Activated CD4-positive, alpha-beta T cell treated with anti-CD3 and anti-CD28 coated beads, Interleukin-2, amount 10 ng/mL, durations not matched to agents 24 days and 14 days (primary cell): ENCODE measurements at regions of chr4 and their contacts with region 1.

Region 1: GRCh38 chr4:26459054-26459755 is 31.1 kb downstream of the CCKAR start:
- DNase-seq: peak; percentile 65
- H3K4me3 Mint-ChIP-seq: peak overlapping the region; percentile 41
- H3K27ac Mint-ChIP-seq: no peak overlapping the region
- H3K4me1 Mint-ChIP-seq: peaks cover 14% of the 10 kb centered on the region
- H3K27me3 Mint-ChIP-seq: peaks cover 3% of the 10 kb centered on the region

Region 2: DNA sequence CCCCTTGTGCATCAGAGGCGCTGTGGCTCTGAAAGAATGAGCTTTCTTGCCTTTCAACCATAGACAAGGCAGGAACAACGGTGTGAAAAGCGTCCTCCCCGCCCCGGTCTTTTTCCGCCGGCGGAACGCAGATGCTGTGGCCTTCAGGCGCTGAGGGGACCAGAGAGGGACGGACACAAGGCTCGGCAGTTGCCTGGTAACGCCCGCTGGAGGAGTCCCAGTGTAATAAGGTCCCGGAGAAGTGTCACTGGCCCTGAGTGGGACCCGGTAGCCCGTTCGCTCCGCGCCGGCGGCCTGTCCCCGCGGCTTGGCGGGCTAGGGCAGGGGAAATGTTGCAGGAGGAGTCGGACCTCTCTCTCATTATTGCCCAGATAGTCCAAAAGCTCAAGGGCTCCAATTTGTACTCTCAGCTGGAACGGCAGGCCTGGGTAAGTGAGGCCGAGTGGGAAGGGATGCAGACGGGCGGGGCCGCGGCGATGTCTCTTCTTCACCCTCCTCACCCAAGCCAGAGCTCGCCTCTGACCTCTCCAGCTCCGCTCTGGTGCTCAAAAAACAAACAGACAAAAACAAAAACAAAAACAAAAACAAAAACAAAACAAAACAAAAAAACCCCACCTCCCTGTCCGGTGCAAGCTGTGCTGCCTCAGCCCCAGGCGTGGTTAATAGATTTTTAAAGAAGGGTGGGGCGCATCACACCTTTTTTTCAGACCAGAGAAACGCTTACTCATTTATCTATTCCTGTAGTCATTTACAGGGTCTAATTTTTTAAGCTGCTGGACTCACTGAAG is 124.9 kb after region 1 on chr4 and contains the start of gene TBC1D19:
- intact Hi-C with region 1: loop called (anchors 10 kb)
- DNase-seq: peak; percentile 96
- H3K4me3 Mint-ChIP-seq: peak within 1 kb of the TSS; percentile 98
- H3K27ac Mint-ChIP-seq: peak within 1 kb of the TSS; percentile 95
- H3K4me1 Mint-ChIP-seq: peaks cover 27% of the 10 kb centered on the region
- H3K27me3 Mint-ChIP-seq: no peaks in the 10 kb centered on the region
- total RNA-seq, gene TBC1D19: 3.3 and 3.6 TPM in 2 replicates

Region 3: GRCh38 chr4:26719954-26720552 is 260.8 kb after region 1 on chr4:
- intact Hi-C with region 1: loop called (anchors 1 kb)
- DNase-seq: no peak
- H3K4me3 Mint-ChIP-seq: no peak overlapping the region
- H3K27ac Mint-ChIP-seq: no peak overlapping the region
- H3K4me1 Mint-ChIP-seq: no peaks in the 10 kb centered on the region
- H3K27me3 Mint-ChIP-seq: no peaks in the 10 kb centered on the region

Region 4: GRCh38 chr4:27010334-27010940 is 551.2 kb after region 1 on chr4:
- intact Hi-C with region 1: loop called (anchors 1 kb)
- DNase-seq: peak; percentile 84
- H3K4me3 Mint-ChIP-seq: no peak overlapping the region
- H3K27ac Mint-ChIP-seq: no peak overlapping the region
- H3K4me1 Mint-ChIP-seq: peaks cover 9% of the 10 kb centered on the region
- H3K27me3 Mint-ChIP-seq: no peaks in the 10 kb centered on the region